CD4-positive, alpha-beta T cell (primary cell): ENCODE measurements at regions of chr3 and their contacts with region 1.

Region 1: GRCh38 chr3:136186344-136186743 is 9.8 kb downstream of the MSL2 start:
- DNase-seq: peak in 7 of 14 experiments; percentile 13 to 49 (median 37)
- ATAC-seq: peak; percentile 52
- H3K4me3 ChIP-seq: no peak overlapping the region
- H3K4me3 Mint-ChIP-seq: peak overlapping the region; percentile 70
- H3K27ac ChIP-seq: peak overlapping the region in 1 of 2 donors; percentile 24
- H3K27ac Mint-ChIP-seq: peak overlapping the region; percentile 30
- H3K4me1 ChIP-seq: peaks cover 88% of the 10 kb centered on the region
- H3K4me1 Mint-ChIP-seq: peaks cover 93% of the 10 kb centered on the region
- H3K27me3 ChIP-seq: no peaks in the 10 kb centered on the region
- H3K27me3 Mint-ChIP-seq: no peaks in the 10 kb centered on the region
- CTCF ChIP-seq: no peak

Region 2: DNA sequence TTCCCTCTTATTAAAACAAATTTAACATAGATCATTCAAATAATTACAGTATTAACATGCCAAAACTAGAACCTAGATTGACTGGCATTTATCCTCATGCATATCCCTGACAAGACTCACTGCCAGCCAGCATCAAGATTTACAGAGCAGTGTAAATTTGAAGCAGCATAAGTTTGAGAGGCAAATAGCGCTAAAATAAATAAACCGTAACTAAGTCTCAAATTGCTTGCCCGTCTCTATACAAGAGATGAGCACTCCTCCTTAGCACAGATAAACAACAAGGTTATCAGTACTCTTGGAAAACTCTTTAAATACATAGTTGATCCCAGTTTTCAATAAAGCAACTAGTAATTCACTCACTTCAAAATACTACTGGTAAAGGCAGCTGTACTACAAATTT is 19.8 kb before region 1 on chr3:
- CTCF ChIA-PET with region 1: interaction called, 5 read pairs
- POLR2A ChIA-PET with region 1: no interaction called
- intact Hi-C with region 1: loop called in 1 of 2 experiments (anchors 2 kb)
- DNase-seq: no peak
- ATAC-seq: no peak
- H3K4me3 ChIP-seq: no peak overlapping the region
- H3K4me3 Mint-ChIP-seq: no peak overlapping the region
- H3K27ac ChIP-seq: no peak overlapping the region
- H3K27ac Mint-ChIP-seq: peak overlapping the region; percentile 2
- H3K4me1 ChIP-seq: peaks cover 36% of the 10 kb centered on the region
- H3K4me1 Mint-ChIP-seq: peaks cover 70% of the 10 kb centered on the region
- H3K27me3 ChIP-seq: no peaks in the 10 kb centered on the region
- H3K27me3 Mint-ChIP-seq: no peaks in the 10 kb centered on the region
- CTCF ChIP-seq: no peak

Region 3: DNA sequence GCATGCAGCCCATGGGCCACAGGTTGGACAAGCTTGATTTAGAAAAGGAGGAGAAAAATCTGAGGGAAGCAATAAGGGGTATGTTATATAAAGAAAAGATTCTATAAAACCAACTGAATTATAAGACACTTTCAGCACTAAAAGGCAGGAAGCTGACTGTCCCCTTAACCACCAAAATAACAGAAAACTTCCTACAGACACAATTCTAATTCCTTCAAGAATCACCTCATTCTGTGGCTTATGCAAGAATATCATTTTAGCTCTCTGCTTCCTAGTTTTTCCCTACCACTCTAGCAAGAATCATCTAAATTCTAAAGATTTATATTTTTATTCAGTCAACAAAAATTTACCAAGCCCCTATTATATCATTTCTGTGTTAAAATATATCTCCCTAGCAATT is 559.6 kb after region 1 on chr3:
- CTCF ChIA-PET with region 1: no interaction called
- POLR2A ChIA-PET with region 1: no interaction called
- intact Hi-C with region 1: no loop called
- DNase-seq: no peak
- ATAC-seq: no peak
- H3K4me3 ChIP-seq: no peak overlapping the region
- H3K4me3 Mint-ChIP-seq: no peak overlapping the region
- H3K27ac ChIP-seq: no peak overlapping the region
- H3K27ac Mint-ChIP-seq: peak overlapping the region; percentile 44
- H3K4me1 ChIP-seq: peaks cover 37% of the 10 kb centered on the region
- H3K4me1 Mint-ChIP-seq: peaks cover 53% of the 10 kb centered on the region
- H3K27me3 ChIP-seq: no peaks in the 10 kb centered on the region
- H3K27me3 Mint-ChIP-seq: no peaks in the 10 kb centered on the region
- CTCF ChIP-seq: no peak

Region 4: GRCh38 chr3:137471130-137471529 is 1284.8 kb after region 1 on chr3:
- CTCF ChIA-PET with region 1: no interaction called
- POLR2A ChIA-PET with region 1: no interaction called
- intact Hi-C with region 1: no loop called
- DNase-seq: no peak
- ATAC-seq: no peak
- H3K4me3 ChIP-seq: no peak overlapping the region
- H3K4me3 Mint-ChIP-seq: no peak overlapping the region
- H3K27ac ChIP-seq: no peak overlapping the region
- H3K27ac Mint-ChIP-seq: no peak overlapping the region
- H3K4me1 ChIP-seq: no peaks in the 10 kb centered on the region
- H3K4me1 Mint-ChIP-seq: no peaks in the 10 kb centered on the region
- H3K27me3 ChIP-seq: no peaks in the 10 kb centered on the region
- H3K27me3 Mint-ChIP-seq: no peaks in the 10 kb centered on the region
- CTCF ChIP-seq: no peak